Left ventricle myocardium inferior (tissue), 1 donor: ENCODE measurements at regions of chr7 and their contacts with region 1.

Region 1: GRCh38 chr7:150778738-150779301 is 21.3 kb downstream of the TMEM176B start:
- DNase-seq: peak; percentile 85
- H3K4me3 ChIP-seq: no peak overlapping the region
- H3K27ac ChIP-seq: no peak overlapping the region
- H3K4me1 ChIP-seq: peaks cover 7% of the 10 kb centered on the region
- H3K27me3 ChIP-seq: no peaks in the 10 kb centered on the region
- CTCF ChIP-seq: peak; percentile 94

Region 2: GRCh38 chr7:150876817-150877526 is 98.2 kb after region 1 on chr7:
- intact Hi-C with region 1: loop called (anchors 5 kb)
- DNase-seq: peak; percentile 36
- H3K4me3 ChIP-seq: no peak overlapping the region
- H3K27ac ChIP-seq: peak overlapping the region; percentile 5
- H3K4me1 ChIP-seq: peaks cover 15% of the 10 kb centered on the region
- H3K27me3 ChIP-seq: no peaks in the 10 kb centered on the region
- CTCF ChIP-seq: peak; percentile 69